Activated CD4-positive, alpha-beta memory T cell treated with anti-CD3 and anti-CD28 coated beads for 36 hours (primary cell): ENCODE measurements at regions of chr10 and their contacts with region 1.

Region 1: GRCh38 chr10:86936661-86937501 is 20.5 kb downstream of the MMRN2 start:
- DNase-seq: no peak
- H3K4me3 Mint-ChIP-seq: no peak overlapping the region
- H3K27ac Mint-ChIP-seq: no peak overlapping the region
- H3K4me1 Mint-ChIP-seq: peaks cover 1% of the 10 kb centered on the region
- H3K27me3 Mint-ChIP-seq: no peaks in the 10 kb centered on the region

Region 2: GRCh38 chr10:86872757-86873156 is 64.1 kb before region 1 on chr10:
- CTCF ChIA-PET with region 1: no interaction called
- POLR2A ChIA-PET with region 1: no interaction called
- intact Hi-C with region 1: no loop called
- DNase-seq: no peak
- H3K4me3 Mint-ChIP-seq: no peak overlapping the region
- H3K27ac Mint-ChIP-seq: no peak overlapping the region
- H3K4me1 Mint-ChIP-seq: no peaks in the 10 kb centered on the region
- H3K27me3 Mint-ChIP-seq: no peaks in the 10 kb centered on the region

Region 3: DNA sequence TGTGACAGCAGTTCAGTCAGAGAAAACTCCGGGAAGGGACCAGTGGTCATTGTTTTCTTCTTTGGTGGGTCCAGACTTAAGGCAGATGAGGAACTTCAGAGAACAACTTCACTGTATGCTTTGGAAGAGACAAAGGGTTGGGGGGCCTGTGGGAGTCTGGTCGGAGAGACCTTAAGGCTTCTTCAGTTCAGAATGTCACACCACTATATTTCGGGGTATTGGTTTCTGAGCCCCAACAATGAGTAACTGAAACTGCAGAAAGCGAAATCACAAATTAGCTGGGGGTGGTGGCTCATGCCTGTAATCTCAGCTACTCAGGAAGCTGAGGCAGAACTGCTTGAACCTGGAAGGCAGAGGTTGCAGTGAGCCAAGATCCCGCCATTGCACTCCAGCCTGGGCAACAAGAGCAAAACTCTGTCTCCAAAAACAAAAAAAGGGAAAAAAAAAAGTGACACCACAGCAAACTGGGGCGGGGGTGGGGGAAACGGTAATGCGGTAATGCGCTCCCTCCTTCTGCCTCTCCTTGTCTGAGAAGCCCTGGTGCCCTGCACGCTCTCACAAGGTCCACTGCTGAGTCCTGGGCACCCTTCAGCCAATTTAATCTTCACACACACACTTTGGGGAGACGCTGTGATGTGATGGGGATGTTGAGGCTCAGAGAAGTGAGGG is 29.2 kb after region 1 on chr10:
- CTCF ChIA-PET with region 1: interaction called, 47 read pairs
- POLR2A ChIA-PET with region 1: no interaction called
- intact Hi-C with region 1: loop called (anchors 1 kb)
- DNase-seq: peak; percentile 49
- H3K4me3 Mint-ChIP-seq: peak overlapping the region; percentile 38
- H3K27ac Mint-ChIP-seq: peak overlapping the region; percentile 69
- H3K4me1 Mint-ChIP-seq: peaks cover 26% of the 10 kb centered on the region
- H3K27me3 Mint-ChIP-seq: peaks cover 2% of the 10 kb centered on the region

Region 4: GRCh38 chr10:86971232-86971991 is 34.5 kb after region 1 on chr10:
- CTCF ChIA-PET with region 1: interaction called, 47 read pairs
- POLR2A ChIA-PET with region 1: no interaction called
- intact Hi-C with region 1: loop called (anchors 1 kb)
- DNase-seq: peak; percentile 89
- H3K4me3 Mint-ChIP-seq: peak overlapping the region; percentile 71
- H3K27ac Mint-ChIP-seq: peak overlapping the region; percentile 58
- H3K4me1 Mint-ChIP-seq: peaks cover 22% of the 10 kb centered on the region
- H3K27me3 Mint-ChIP-seq: peaks cover 2% of the 10 kb centered on the region